HepG2 (cell line): ENCODE measurements at regions of chr11 and their contacts with region 1.

Region 1: DNA sequence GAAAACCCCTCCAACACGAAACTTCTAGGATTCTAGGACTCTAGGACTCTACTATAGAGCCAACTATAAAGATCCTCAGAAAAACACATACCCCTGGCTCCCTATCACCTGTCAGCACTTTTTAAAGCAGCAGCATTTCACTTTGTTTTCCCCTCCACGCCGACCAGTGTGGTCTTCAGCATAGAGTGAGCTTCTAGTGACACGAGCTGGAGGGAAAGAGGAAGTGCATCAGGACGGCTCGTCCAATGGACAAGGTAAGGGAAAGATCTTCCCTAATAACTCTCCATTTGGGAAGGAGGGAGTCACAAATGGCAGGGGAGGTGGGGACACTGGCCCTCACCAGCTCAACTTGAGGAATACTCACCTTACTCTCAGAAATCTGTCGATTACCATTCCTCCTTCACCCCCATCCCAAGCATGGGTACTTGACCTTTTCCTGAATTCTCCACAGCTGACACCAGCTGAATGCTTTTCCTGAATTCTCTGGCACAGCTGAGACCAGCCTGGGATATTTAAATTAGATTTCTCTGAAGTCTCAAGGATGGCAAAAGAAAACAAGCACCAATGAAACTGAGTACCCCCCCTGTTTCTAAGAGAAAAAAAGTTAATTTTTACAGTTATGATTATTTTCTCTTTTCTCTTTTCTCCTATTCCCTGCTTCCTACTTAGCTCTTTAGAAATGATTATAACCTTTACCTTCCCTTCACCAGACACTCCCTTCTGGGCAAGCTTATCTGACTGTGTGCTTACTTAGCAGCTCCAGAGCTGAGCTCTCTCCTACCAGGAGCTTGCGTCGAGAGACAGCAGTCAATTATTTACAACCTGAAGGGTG is 33.3 kb upstream of the NNMT start:
- DNase-seq: peak; percentile 44
- ATAC-seq: peak; percentile 79
- H3K4me3 ChIP-seq: no peak overlapping the region
- H3K27ac ChIP-seq: no peak overlapping the region
- H3K4me1 ChIP-seq: peaks cover 8% of the 10 kb centered on the region
- H3K27me3 ChIP-seq: peaks cover 4 to 21% of the 10 kb centered on the region in 2 experiments; a peak in 3 of 5 replicates
- CTCF ChIP-seq: peak; percentile 79
- EP300 ChIP-seq: no peak
- POLR2A ChIP-seq: no peak
- RAD21 ChIP-seq: peak; percentile 65

Region 2: DNA sequence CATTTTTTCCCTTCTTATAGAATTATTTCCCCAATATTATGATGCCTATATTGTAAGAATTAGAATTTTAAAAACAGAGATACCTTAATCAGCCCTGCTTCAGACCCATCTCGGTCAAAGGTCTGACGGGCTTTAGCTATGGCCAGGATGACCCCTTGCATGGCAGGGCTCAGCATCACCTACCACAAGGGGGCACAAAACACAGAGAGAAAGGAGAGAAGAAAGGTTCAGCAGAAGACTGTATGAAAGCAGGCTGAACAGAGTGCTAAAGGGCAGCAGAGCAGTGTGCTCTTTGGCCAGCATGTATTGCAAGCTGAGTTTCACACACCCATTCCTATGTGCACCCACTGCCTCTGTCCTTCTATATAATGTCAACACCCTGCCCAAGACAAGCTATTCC is 456.5 kb before region 1 on chr11:
- CTCF ChIA-PET with region 1: interaction called, 5 read pairs
- POLR2A ChIA-PET with region 1: no interaction called
- in situ Hi-C with region 1: loop called (anchors 25 kb)
- intact Hi-C with region 1: loop called (anchors 1 kb)
- DNase-seq: peak; percentile 64
- ATAC-seq: peak; percentile 100
- H3K4me3 ChIP-seq: no peak overlapping the region
- H3K27ac ChIP-seq: no peak overlapping the region
- H3K4me1 ChIP-seq: peaks cover 9% of the 10 kb centered on the region; the same call in 1 of the 2 replicates
- H3K27me3 ChIP-seq: no peaks in the 10 kb centered on the region
- CTCF ChIP-seq: peak; percentile 71
- EP300 ChIP-seq: no peak
- POLR2A ChIP-seq: no peak
- RAD21 ChIP-seq: peak; percentile 14; the same call in 1 of the 2 replicates

Region 3: DNA sequence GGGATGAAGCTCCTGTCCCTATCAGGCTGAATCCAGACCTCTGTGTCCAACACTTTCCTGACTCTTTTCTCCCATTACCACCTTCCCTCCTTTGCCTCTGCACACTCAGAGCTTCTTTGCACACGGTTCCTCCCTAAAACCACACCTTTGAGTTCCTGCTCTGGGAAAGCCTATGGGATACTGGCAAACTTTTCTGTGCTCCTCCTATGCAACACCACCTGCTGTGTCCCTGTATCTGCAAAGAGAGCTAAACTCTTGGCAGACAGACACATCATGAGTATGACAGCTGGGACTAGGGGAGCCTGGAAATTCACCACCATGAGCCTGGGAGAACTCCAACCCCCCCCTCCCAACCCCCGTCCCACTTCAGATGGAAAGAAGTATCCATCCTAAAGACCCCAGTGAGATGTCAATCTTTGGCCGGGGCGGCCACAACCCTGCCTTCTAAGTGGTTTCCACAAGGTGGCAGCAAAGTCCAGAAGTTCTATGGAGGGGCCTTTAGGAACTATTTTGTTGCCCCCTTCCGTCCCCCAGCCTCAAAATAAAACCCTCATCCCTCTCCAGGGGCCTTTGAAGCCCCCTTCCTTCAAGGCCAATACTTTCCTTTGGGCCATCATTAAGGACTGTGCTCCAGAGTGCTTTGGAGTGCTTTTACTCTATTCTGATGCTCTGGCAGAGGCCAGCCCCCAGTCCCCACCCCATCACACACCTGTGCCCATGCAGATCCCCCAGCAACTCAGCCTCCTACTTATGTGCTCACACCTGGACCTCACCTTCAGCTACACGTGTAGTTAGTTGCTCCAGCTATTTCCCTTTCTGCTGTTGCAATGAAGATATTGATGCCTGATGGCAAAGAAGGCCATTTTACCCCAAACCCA is 268.6 kb before region 1 on chr11:
- CTCF ChIA-PET with region 1: interaction called, 34 read pairs
- POLR2A ChIA-PET with region 1: interaction called, 3 read pairs
- in situ Hi-C with region 1: loop called (anchors 5 kb)
- intact Hi-C with region 1: loop called (anchors 1 kb)
- DNase-seq: no peak
- ATAC-seq: peak; percentile 63; the same call in 2 of the 3 replicates
- H3K4me3 ChIP-seq: no peak overlapping the region
- H3K27ac ChIP-seq: no peak overlapping the region
- H3K4me1 ChIP-seq: no peaks in the 10 kb centered on the region
- H3K27me3 ChIP-seq: peaks cover 0 to 2% of the 10 kb centered on the region in 2 experiments; a peak in 3 of 5 replicates
- CTCF ChIP-seq: peak; percentile 64
- EP300 ChIP-seq: no peak
- POLR2A ChIP-seq: no peak
- RAD21 ChIP-seq: peak; percentile 46; the same call in 1 of the 2 replicates

Region 4: GRCh38 chr11:114036156-114036811 is 226.6 kb before region 1 on chr11:
- CTCF ChIA-PET with region 1: interaction called, 46 read pairs
- POLR2A ChIA-PET with region 1: no interaction called
- in situ Hi-C with region 1: loop called (anchors 5 kb)
- intact Hi-C with region 1: loop called (anchors 1 kb)
- DNase-seq: peak; percentile 60
- ATAC-seq: peak; percentile 99
- H3K4me3 ChIP-seq: peak overlapping the region in 1 of 3 experiments; percentile 31; a peak in 1 of 6 replicates
- H3K27ac ChIP-seq: no peak overlapping the region
- H3K4me1 ChIP-seq: peaks cover 5% of the 10 kb centered on the region; the same call in 1 of the 2 replicates
- H3K27me3 ChIP-seq: peaks cover 0 to 17% of the 10 kb centered on the region in 2 experiments; a peak in 3 of 5 replicates
- CTCF ChIP-seq: peak; percentile 96
- EP300 ChIP-seq: no peak
- POLR2A ChIP-seq: no peak
- RAD21 ChIP-seq: peak; percentile 93

Region 5: DNA sequence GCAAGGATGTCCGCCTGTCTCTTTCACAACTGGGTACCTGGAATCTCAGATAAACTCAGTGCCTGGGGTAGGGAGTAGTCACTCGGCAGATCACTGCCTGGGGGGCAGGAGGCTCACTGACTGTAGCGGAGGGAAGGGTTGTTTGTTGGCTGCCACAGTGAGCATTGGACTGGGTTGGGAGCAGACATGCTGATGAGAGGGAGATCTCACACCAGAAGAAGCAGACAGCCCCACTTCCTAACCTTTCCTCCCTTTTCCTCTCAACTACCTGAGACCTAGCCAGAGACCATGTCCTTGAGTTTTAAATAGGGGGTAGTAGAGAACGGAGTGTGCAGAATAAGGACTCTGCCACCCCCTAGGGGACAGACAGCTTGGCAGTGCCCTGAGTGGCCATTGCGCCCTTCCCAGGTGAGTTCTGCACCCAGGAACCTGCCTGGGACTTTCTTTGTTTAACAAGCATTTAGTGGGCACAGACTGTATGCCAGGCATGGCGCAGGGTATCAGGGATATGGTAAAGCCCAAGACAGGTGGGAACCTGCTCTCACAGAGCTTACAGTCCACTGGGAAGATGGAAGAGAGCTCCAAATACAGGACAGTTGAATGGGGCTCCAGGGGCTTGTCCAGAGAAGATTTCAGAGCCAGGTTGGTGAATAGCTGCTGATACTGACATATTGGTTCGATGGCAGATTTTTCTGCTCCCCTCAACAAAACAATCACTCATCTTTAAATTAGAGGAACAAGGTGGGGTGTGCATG is 82.4 kb before region 1 on chr11:
- CTCF ChIA-PET with region 1: no interaction called
- POLR2A ChIA-PET with region 1: no interaction called
- in situ Hi-C with region 1: no loop called
- intact Hi-C with region 1: loop called (anchors 10 kb)
- DNase-seq: peak; percentile 12
- ATAC-seq: peak; percentile 86
- H3K4me3 ChIP-seq: no peak overlapping the region
- H3K27ac ChIP-seq: no peak overlapping the region
- H3K4me1 ChIP-seq: no peaks in the 10 kb centered on the region
- H3K27me3 ChIP-seq: peaks cover 2 to 4% of the 10 kb centered on the region in 2 experiments; a peak in 2 of 5 replicates
- CTCF ChIP-seq: peak; percentile 63
- EP300 ChIP-seq: no peak
- POLR2A ChIP-seq: no peak
- RAD21 ChIP-seq: no peak

Region 6: DNA sequence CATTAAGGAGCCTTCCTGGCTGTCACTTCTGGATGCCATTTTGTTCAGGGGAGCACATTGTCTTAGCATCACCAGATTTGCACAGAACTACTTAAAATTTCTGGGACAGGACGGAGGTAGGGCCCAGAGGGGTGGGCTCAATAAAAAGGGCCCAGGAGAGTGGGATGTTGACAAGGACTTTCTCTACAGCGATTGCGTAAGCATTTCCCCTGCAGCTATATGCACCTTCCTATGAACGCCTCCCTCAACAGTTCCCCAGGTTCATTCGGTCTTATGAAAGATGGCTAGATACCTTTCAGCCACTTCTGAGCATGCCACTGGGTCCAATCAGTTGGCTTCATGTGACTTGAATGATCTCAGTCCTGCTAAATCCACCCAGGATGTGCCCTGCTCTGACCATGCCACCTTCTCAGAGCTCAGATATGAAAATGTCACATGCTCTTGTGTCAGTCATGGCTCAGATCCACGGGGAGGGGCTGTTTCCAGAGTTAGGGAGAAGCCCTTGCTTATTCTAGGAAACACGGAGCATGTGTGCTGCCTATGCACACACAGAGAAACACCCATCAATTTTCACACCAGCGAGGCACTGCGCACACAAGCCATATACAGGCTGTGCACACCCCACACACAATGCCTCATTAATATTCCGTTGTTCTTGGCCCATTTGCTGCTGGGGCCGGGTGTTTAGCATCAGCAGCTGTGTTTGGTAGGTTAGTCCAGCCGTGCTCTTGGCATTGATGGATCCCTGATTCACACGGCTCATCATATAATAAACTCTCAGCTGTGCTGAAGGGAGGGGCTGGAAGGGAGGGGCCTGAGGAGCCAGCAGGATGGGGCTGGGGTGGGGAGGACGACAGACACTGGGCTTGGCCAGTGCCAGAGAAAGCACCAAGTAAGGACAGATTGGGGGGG is 19.2 kb before region 1 on chr11:
- CTCF ChIA-PET with region 1: no interaction called
- POLR2A ChIA-PET with region 1: no interaction called
- in situ Hi-C with region 1: no loop called
- intact Hi-C with region 1: no loop called
- DNase-seq: no peak
- ATAC-seq: no peak
- H3K4me3 ChIP-seq: no peak overlapping the region
- H3K27ac ChIP-seq: no peak overlapping the region
- H3K4me1 ChIP-seq: no peaks in the 10 kb centered on the region
- H3K27me3 ChIP-seq: peaks cover 1 to 6% of the 10 kb centered on the region in 2 experiments; a peak in 2 of 5 replicates
- CTCF ChIP-seq: no peak
- EP300 ChIP-seq: no peak
- POLR2A ChIP-seq: no peak
- RAD21 ChIP-seq: no peak